Ascending aorta (tissue), 2 donors: ENCODE measurements at regions of chr5 and their contacts with region 1.

Region 1: DNA sequence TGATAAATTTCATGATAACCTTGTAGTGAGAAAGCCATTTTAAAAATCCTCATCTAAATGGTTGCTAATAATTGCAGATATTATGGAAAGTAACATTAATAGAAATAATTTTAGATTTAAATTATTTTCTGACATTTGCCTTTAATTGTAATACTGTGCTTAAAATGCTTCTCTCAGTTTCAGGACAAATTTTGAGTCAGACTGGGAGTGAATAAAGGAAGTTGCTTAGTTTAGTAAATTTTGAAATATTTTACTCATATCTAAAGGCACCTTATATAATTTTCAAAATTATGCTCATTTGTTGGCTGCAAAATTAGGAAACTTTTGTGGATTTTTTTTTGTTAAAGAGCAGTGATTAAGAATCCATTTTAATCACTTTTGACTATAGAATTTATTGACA is 93.8 kb downstream of the CSNK1G3 start:
- DNase-seq: no peak
- H3K4me3 ChIP-seq: no peak overlapping the region
- H3K27ac ChIP-seq: no peak overlapping the region
- H3K4me1 ChIP-seq: no peaks in the 10 kb centered on the region
- H3K27me3 ChIP-seq: no peaks in the 10 kb centered on the region
- CTCF ChIP-seq: no peak

Region 2: GRCh38 chr5:122907238-122907637 is 698.6 kb before region 1 on chr5:
- intact Hi-C with region 1: loop called (anchors 10 kb)
- DNase-seq: no peak
- H3K4me3 ChIP-seq: peak overlapping the region in 1 of 2 donors; percentile 24
- H3K27ac ChIP-seq: peak overlapping the region; percentile 41 to 68
- H3K4me1 ChIP-seq: peaks cover 0 to 16% of the 10 kb centered on the region in 2 donors
- H3K27me3 ChIP-seq: no peaks in the 10 kb centered on the region
- CTCF ChIP-seq: no peak